Activated naive CD4-positive, alpha-beta T cell treated with anti-CD3 and anti-CD28 coated beads for 36 hours (primary cell): ENCODE measurements at regions of chr4 and their contacts with region 1.

Region 1: DNA sequence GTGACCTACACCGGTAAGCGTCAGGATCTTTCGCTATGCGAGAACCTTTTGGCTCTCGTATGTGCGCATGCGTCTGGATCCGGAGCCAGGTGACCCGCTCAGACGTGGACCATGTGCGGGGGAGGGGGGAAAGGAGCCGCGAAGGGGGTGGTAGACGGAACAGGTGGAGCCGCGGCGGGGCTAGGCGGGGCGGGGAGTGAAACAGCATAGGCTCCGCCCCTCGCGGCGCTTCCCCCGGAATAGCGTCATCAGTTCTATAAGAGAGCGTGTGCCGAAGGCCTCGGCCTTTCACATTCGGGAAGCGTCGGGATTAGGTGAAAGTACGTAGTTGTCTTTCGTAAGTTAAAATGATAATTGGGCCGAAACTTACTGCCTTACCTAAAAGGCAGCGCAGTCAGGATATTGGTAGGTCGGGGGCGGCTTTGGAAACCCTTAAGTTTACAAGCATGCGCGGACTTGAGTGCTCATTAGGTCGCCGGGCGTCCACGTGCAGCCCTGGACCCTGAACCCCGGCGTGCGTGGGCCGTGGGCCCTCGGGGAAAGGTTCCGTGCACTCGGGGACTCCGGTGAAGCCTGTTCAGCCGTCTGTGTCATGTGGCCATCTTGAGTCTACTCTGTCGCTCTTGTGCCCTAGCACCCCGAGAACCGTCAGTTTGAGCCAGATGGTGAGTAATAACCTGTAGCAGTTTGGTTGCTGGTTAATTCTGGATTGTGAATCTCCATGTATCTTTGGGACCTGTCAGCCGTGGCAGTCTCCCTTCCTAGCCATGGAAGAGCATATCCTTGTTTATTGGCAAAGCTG is 74.1 kb downstream of the PRSS12 start:
- DNase-seq: peak; percentile 99
- H3K4me3 Mint-ChIP-seq: peak overlapping the region; percentile 87
- H3K27ac Mint-ChIP-seq: peak overlapping the region; percentile 98
- H3K4me1 Mint-ChIP-seq: peaks cover 24% of the 10 kb centered on the region
- H3K27me3 Mint-ChIP-seq: no peaks in the 10 kb centered on the region

Region 2: GRCh38 chr4:118338981-118339765 is 60.5 kb after region 1 on chr4:
- CTCF ChIA-PET with region 1: no interaction called
- intact Hi-C with region 1: no loop called
- DNase-seq: no peak
- H3K4me3 Mint-ChIP-seq: no peak overlapping the region
- H3K27ac Mint-ChIP-seq: no peak overlapping the region
- H3K4me1 Mint-ChIP-seq: no peaks in the 10 kb centered on the region
- H3K27me3 Mint-ChIP-seq: peaks cover 6% of the 10 kb centered on the region

Region 3: DNA sequence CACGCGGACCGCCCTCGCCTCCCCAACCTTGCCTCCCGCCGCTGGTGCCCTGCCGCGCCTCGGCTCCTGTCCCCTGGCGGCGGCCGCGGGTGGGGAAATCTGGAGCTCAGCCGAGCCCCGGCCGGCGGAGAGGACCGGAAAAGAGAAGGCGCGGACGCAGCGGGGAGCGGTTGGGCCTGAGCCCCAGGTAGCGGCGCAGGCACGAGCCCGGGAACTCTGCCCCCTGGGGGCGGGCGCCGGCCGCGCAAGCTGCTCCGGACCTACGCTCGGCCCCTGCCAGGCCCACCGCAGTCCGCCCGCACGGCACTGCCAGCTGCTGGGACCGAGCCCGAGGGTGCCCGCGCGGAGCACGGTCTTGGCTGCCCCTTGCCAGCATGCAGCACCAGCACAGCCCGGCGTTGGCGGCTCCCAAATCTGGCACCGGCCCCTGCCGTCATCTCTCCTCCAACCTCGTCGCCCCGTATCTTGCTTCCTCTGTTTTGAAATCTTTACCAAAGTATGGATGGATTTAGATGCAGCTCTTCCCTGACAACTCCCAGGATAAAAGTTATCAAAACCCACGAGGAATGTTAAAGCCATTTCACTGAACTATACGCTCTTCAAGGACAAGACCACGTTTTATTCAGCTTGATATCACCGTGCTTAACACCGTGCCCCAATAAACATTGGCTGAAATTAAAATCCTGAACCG is 74.3 kb after region 1 on chr4 and contains the start of gene PRSS12:
- CTCF ChIA-PET with region 1: interaction called, 3 read pairs
- intact Hi-C with region 1: loop called (anchors 1 kb)
- DNase-seq: peak; percentile 69
- H3K4me3 Mint-ChIP-seq: peak within 1 kb of the TSS; percentile 56
- H3K27ac Mint-ChIP-seq: no peak within 1 kb of the TSS
- H3K4me1 Mint-ChIP-seq: peaks cover 14% of the 10 kb centered on the region
- H3K27me3 Mint-ChIP-seq: peaks cover 72% of the 10 kb centered on the region
- total RNA-seq, gene PRSS12: not detected

Region 4: GRCh38 chr4:118684873-118685811 is 406.5 kb after region 1 on chr4 and contains the start of gene METTL14:
- CTCF ChIA-PET with region 1: no interaction called
- intact Hi-C with region 1: loop called (anchors 1 kb)
- DNase-seq: peak; percentile 93
- H3K4me3 Mint-ChIP-seq: peak within 1 kb of the TSS; percentile 95
- H3K27ac Mint-ChIP-seq: peak within 1 kb of the TSS; percentile 89
- H3K4me1 Mint-ChIP-seq: peaks cover 27% of the 10 kb centered on the region
- H3K27me3 Mint-ChIP-seq: no peaks in the 10 kb centered on the region
- total RNA-seq, gene METTL14: 35.9 to 36.9 TPM

Region 5: DNA sequence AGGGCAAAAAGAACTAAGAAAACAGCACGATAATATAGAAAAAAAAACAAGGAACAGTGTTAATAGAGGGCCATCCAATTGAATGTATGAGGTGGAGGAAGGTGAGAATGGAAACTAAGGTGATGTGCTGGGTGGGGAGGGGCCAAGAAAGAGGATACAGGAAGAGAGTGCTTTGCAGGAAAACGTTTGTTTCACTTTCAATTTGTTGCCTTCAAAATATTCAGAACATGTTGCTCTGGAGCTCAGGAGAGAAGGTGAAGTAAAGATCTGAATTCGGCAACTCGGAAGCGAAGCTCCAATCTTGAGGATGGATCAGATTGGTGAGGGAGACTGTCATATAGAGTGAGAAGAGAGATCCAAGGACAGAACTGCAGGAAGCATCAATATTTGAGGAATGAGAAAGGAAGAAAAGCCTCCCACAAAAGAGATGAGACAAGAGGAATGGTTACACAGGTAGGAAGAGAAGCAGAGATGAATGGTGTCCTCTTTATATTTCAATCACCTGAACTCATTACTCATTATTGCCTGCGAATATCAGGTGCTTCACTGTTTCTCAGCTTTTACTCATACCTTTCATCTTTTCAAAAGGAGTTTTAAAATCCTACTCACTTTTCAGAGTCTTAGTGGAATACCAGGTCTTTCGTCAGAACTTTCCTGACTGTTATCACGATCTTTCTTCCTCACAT is 572.0 kb after region 1 on chr4:
- CTCF ChIA-PET with region 1: no interaction called
- intact Hi-C with region 1: loop called (anchors 2 kb)
- DNase-seq: peak; percentile 50
- H3K4me3 Mint-ChIP-seq: peak overlapping the region; percentile 87
- H3K27ac Mint-ChIP-seq: peak overlapping the region; percentile 84
- H3K4me1 Mint-ChIP-seq: peaks cover 18% of the 10 kb centered on the region
- H3K27me3 Mint-ChIP-seq: no peaks in the 10 kb centered on the region

Region 6: DNA sequence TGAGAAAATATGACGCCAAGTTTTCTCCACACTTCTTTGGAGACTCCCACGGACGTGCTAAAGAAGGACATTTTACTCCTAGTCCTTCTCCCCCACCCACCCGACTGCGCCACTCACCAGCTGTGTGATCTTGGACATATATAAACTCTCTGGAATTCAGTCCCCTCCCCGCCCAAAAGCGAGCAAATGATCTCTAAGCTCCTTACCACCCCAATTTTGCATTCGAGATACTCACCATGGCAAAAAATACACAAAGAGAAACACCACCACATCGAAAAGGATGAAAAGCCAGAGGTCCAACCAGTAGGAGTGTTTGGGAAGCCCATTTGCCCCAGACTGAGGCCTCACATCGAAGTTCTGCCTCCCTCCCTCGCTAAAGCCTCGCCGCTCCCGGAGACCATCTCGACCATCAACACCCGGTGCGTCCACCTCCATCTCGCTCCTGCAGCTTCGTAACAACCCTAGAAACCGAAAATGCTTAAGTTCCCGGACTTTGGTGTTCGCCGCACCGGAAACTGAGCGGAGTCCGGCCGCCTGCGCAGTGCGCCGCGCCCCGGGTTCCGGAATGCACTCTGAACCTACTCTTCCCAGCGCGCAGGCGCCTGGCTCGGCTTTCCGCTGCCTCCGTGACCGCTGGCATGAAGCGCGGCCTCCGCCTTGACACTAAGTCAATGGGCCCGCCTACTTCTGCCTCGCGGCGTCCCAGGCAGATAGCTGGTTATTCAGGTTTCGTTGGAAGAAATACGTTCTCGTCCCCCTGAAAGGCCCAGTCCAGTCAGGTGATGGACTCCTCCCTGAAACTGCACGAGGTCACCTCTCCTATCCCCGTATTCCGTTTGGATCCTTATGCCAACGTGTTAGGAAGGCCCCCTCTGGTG is 1021.7 kb after region 1 on chr4:
- CTCF ChIA-PET with region 1: no interaction called
- intact Hi-C with region 1: loop called (anchors 1 kb)
- DNase-seq: peak; percentile 92
- H3K4me3 Mint-ChIP-seq: peak overlapping the region; percentile 97
- H3K27ac Mint-ChIP-seq: peak overlapping the region; percentile 95
- H3K4me1 Mint-ChIP-seq: peaks cover 25% of the 10 kb centered on the region
- H3K27me3 Mint-ChIP-seq: no peaks in the 10 kb centered on the region